Activated CD8-positive, alpha-beta memory T cell treated with anti-CD3 and anti-CD28 coated beads, Interleukin-2, amount 10 ng/mL, durations not matched to agents 7 days and 5 days (primary cell): ENCODE measurements at regions of chr11 and their contacts with region 1.

Region 1: GRCh38 chr11:65817835-65818742 is 15.7 kb upstream of the SNX32 start:
- DNase-seq: peak; percentile 95
- ATAC-seq: peak; percentile 91
- H3K4me3 Mint-ChIP-seq: peak overlapping the region; percentile 75
- H3K27ac Mint-ChIP-seq: peak overlapping the region; percentile 70
- H3K4me1 Mint-ChIP-seq: peaks cover 18% of the 10 kb centered on the region
- H3K27me3 Mint-ChIP-seq: peaks cover 4% of the 10 kb centered on the region

Region 2: GRCh38 chr11:65700391-65700790 is 117.7 kb before region 1 on chr11:
- CTCF ChIA-PET with region 1: interaction called, 13 read pairs
- DNase-seq: no peak
- ATAC-seq: no peak
- H3K4me3 Mint-ChIP-seq: no peak overlapping the region
- H3K27ac Mint-ChIP-seq: no peak overlapping the region
- H3K4me1 Mint-ChIP-seq: peaks cover 3% of the 10 kb centered on the region
- H3K27me3 Mint-ChIP-seq: peaks cover 22% of the 10 kb centered on the region

Region 3: DNA sequence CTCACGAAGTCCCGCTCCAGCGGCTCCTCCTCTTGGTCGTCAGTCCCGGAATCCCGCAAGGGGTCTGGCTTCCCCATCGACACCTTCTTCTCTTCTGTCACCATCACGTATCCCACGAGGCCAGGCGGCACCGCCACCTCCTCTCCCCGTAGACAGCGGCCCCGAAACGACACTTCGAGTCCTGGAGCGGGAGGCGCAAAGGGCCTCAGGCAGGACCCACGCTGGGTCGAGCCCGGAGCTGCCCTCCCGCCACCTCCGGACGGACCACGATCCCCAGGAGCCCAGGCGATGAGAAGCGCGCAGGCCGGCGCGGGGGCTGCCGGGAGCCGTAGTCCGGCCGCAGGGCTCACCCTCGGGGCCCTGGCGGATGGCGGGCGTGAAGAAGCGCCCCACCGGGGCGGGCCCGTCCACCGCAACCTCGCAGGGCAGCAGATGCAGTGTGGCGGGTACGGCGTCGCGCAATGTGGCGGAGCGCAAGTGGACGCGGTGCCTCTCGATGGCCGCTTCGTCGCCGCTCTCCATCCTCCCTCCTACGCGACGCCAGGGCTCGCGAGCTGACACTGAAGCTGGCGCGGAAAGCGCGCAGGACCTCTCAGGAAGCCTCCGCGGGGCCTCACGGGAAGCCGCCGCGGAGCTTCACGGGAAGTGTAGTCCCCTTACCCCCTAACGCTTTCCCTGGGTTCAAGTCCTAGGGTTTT is 97.7 kb before region 1 on chr11 and contains the start of gene RNASEH2C:
- CTCF ChIA-PET with region 1: interaction called, 17 read pairs
- DNase-seq: peak; percentile 88
- ATAC-seq: peak; percentile 94
- H3K4me3 Mint-ChIP-seq: peak within 1 kb of the TSS; percentile 98
- H3K27ac Mint-ChIP-seq: peak within 1 kb of the TSS; percentile 85
- H3K4me1 Mint-ChIP-seq: peaks cover 33% of the 10 kb centered on the region
- H3K27me3 Mint-ChIP-seq: no peaks in the 10 kb centered on the region
- total RNA-seq, gene RNASEH2C: 90.5 to 109 TPM

Region 4: DNA sequence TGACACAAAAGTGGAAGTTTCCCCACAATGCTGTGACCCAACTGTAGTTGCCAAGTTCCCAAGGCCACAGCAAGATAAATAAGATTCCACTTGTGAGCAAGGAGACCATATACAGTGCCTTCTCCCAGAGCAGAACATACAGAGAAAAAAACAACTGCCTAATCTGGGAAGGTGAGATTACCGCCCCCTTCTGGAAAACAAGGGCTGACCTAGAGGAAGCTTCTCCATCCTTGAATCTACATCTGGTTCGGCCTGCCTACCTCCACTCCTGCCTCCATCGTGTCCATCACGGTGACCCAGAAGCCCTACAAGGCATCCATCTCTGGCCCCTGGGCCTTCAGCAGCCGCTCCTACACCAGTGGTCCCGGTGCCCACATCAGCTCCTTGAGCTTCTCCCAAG is 91.4 kb before region 1 on chr11:
- CTCF ChIA-PET with region 1: interaction called, 14 read pairs
- DNase-seq: no peak
- ATAC-seq: no peak
- H3K4me3 Mint-ChIP-seq: no peak overlapping the region
- H3K27ac Mint-ChIP-seq: no peak overlapping the region
- H3K4me1 Mint-ChIP-seq: peaks cover 5% of the 10 kb centered on the region
- H3K27me3 Mint-ChIP-seq: peaks cover 6% of the 10 kb centered on the region

Region 5: GRCh38 chr11:65766535-65766934 is 51.6 kb before region 1 on chr11:
- CTCF ChIA-PET with region 1: interaction called, 20 read pairs
- DNase-seq: no peak
- ATAC-seq: no peak
- H3K4me3 Mint-ChIP-seq: no peak overlapping the region
- H3K27ac Mint-ChIP-seq: no peak overlapping the region
- H3K4me1 Mint-ChIP-seq: peaks cover 8% of the 10 kb centered on the region
- H3K27me3 Mint-ChIP-seq: peaks cover 3% of the 10 kb centered on the region

Region 6: GRCh38 chr11:65791691-65792213 is 26.3 kb before region 1 on chr11:
- CTCF ChIA-PET with region 1: interaction called, 35 read pairs
- DNase-seq: peak; percentile 85
- ATAC-seq: peak; percentile 95
- H3K4me3 Mint-ChIP-seq: no peak overlapping the region
- H3K27ac Mint-ChIP-seq: peak overlapping the region; percentile 73
- H3K4me1 Mint-ChIP-seq: peaks cover 22% of the 10 kb centered on the region
- H3K27me3 Mint-ChIP-seq: peaks cover 34% of the 10 kb centered on the region

Region 7: DNA sequence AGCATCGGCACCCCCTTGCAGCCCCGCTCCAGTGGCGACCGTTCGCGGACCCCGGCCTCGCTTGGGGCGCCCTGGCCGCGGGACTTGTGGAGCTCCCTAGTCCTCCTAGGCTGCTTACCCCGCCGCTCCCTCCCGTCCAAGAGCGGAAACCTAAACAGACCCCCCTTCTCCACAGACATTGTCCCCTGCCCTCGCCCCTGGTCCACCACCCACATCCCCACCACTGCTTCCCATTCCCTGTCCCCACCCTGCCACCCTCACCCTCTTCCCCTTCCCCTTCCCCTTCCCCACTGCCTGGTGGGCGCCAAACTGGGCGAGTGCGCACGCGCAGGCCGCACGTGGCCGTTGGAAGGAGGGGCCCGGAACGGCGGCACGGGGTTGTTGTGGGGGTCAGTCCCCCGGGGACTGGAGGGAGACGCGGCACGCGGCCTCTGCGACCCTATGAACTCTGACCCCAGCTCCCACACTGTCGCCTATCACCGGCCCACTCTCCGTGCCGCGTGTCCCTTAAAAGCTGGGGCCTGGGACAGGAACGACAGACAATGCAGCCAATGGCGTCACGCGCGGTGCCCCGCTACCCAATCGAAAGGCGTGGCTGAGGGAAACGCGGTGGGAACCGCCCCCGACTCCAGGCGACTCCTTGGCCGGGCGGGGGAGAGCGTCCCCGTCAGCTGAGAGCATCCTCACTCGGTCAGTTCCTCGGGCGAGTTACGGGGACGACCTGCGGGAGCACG is 15.4 kb after region 1 on chr11 and contains the start of gene SNX32:
- CTCF ChIA-PET with region 1: interaction called, 15 read pairs
- DNase-seq: peak; percentile 97
- ATAC-seq: peak; percentile 100
- H3K4me3 Mint-ChIP-seq: no peak within 1 kb of the TSS
- H3K27ac Mint-ChIP-seq: peak within 1 kb of the TSS; percentile 31
- H3K4me1 Mint-ChIP-seq: peaks cover 15% of the 10 kb centered on the region
- H3K27me3 Mint-ChIP-seq: peaks cover 28% of the 10 kb centered on the region
- total RNA-seq, gene SNX32: 1.7 to 2.4 TPM